MCF 10A (cell line): ENCODE measurements at regions of chr17 and their contacts with region 1.

Region 1: GRCh38 chr17:50956750-50957523 is 90.8 kb upstream of the TOB1 start:
- DNase-seq: peak; percentile 72
- H3K4me3 Mint-ChIP-seq: no peak overlapping the region
- H3K27ac Mint-ChIP-seq: no peak overlapping the region
- H3K4me1 Mint-ChIP-seq: peaks cover 32% of the 10 kb centered on the region
- H3K27me3 Mint-ChIP-seq: no peaks in the 10 kb centered on the region
- CTCF ChIP-seq: peak; percentile 64

Region 2: GRCh38 chr17:50861071-50861676 is 95.8 kb before region 1 on chr17:
- CTCF ChIA-PET with region 1: interaction called, 429 read pairs
- POLR2A ChIA-PET with region 1: interaction called, 473 read pairs
- intact Hi-C with region 1: loop called (anchors 1 kb)
- DNase-seq: no peak
- H3K4me3 Mint-ChIP-seq: no peak overlapping the region
- H3K27ac Mint-ChIP-seq: no peak overlapping the region
- H3K4me1 Mint-ChIP-seq: peaks cover 20% of the 10 kb centered on the region
- H3K27me3 Mint-ChIP-seq: no peaks in the 10 kb centered on the region
- CTCF ChIP-seq: no peak